ENCODE measurements at regions of chr19 and their contacts with region 1.

Region 1: DNA sequence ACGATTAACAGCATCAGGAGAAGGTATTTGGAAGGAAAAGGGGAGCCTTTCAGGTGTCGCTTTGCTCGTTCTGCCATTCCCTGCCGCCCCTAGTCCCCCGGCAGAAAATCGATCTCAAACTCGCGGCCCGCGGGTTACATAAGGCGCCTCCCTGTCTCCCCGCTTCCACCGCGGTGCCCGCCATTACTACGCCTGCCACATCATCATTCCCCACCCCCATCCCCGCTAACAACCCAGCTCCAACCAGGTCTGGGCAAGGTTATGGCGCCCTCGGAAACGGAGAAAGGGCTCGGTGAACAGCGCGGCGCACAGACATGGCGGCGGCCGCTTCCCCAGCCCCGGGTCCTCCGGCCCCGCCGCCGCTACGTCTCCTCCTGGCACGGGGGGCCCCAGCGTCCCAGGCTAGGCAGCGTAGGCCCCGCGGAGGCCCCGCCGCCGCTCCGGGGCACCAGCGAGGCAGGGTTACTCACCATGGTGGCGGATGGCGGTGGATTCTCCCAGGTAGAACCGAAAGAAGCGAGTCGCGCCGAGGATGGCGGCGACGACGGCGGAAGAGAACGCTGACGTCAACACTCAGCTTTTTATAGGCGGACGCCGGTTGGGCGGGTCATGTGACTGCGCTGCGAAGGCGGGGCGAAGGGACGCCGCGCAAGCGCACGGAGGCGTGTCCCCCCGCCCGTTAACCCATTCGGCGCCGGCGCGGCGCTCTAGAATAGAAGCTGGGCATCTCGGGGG is at the start of gene EEF2:
- DNase-seq: peak; percentile 87
- H3K4me3 Mint-ChIP-seq: peak within 1 kb of the TSS; percentile 93
- H3K27ac Mint-ChIP-seq: peak within 1 kb of the TSS; percentile 91
- H3K4me1 Mint-ChIP-seq: peaks cover 43% of the 10 kb centered on the region
- H3K27me3 Mint-ChIP-seq: peaks cover 2% of the 10 kb centered on the region
- total RNA-seq, gene EEF2: 2,359 TPM in 2 replicates

Region 2: GRCh38 chr19:3958808-3959707 is 26.0 kb before region 1 on chr19:
- intact Hi-C with region 1: no loop called
- DNase-seq: no peak
- H3K4me3 Mint-ChIP-seq: no peak overlapping the region
- H3K27ac Mint-ChIP-seq: no peak overlapping the region
- H3K4me1 Mint-ChIP-seq: no peaks in the 10 kb centered on the region
- H3K27me3 Mint-ChIP-seq: no peaks in the 10 kb centered on the region

Region 3: DNA sequence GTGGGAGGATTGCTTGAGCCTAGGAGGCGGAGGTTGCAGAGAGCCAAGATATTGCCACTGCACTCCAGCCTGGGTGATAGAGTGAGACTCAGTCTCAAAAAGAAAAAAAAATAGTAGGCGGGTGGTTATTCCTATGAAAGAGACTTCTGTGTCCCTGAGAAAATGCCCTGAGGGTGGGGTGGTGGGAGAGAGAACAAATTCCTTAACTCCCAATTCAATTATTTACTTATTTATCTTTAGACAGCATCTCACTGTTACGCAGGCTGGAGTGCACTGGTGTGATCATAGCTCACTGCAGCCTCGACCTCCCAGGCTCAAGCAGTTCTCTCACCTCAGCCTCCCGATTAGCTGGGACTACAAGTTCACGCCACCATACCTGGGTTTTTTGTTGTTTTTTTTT is 10.6 kb after region 1 on chr19:
- intact Hi-C with region 1: no loop called
- DNase-seq: no peak
- H3K4me3 Mint-ChIP-seq: no peak overlapping the region
- H3K27ac Mint-ChIP-seq: no peak overlapping the region
- H3K4me1 Mint-ChIP-seq: peaks cover 9% of the 10 kb centered on the region
- H3K27me3 Mint-ChIP-seq: no peaks in the 10 kb centered on the region

Region 4: GRCh38 chr19:4007021-4007835 is 22.2 kb after region 1 on chr19 and contains the start of gene PIAS4:
- intact Hi-C with region 1: loop called (anchors 1 kb)
- DNase-seq: peak; percentile 94
- H3K4me3 Mint-ChIP-seq: peak within 1 kb of the TSS; percentile 90
- H3K27ac Mint-ChIP-seq: peak within 1 kb of the TSS; percentile 84
- H3K4me1 Mint-ChIP-seq: peaks cover 18% of the 10 kb centered on the region
- H3K27me3 Mint-ChIP-seq: no peaks in the 10 kb centered on the region
- total RNA-seq, gene PIAS4: 37.6 and 41.0 TPM in 2 replicates

Region 5: GRCh38 chr19:4123615-4124568 is 138.8 kb after region 1 on chr19 and contains the start of gene MAP2K2:
- intact Hi-C with region 1: loop called (anchors 2 kb)
- DNase-seq: peak; percentile 94
- H3K4me3 Mint-ChIP-seq: peak within 1 kb of the TSS; percentile 100
- H3K27ac Mint-ChIP-seq: peak within 1 kb of the TSS; percentile 98
- H3K4me1 Mint-ChIP-seq: peaks cover 17% of the 10 kb centered on the region
- H3K27me3 Mint-ChIP-seq: no peaks in the 10 kb centered on the region
- total RNA-seq, gene MAP2K2: 131 and 135 TPM in 2 replicates

Region 6: DNA sequence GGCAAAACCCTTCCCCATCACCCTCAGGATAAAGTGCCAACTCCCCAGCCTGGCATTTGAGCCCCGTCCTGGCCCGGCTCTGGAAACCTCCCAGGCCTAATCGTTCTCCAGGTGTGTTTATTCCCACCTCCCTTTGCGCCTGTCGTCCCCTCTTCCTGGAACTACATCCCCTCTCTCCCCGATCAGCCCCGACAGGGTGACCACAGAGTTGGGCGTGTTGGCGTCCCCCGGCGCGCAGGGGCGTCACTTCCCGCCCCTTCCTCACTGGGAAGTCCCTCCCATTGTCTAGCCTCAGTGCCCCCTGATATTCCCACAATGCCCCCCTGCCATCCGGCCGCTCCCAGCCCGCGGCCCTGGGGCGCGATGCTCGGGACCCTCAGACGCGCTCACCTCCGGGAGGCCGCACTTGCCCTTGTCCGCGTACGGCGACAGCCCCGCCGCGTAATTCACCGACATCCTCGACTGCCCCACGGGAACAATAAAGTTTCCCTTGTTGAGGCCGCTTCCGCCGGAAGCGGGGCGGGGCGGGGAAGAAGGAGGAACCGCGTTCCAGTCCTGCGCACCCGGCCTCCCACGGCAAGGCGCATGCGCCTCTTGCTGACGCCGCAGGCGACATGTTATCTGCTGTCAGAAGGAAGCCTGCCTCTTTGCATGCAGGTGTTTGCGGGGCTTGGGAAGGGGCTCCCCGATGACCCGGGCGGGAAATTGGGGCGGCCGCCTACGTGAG is 197.2 kb after region 1 on chr19 and contains the starts of genes ANKRD24 and SIRT6:
- intact Hi-C with region 1: loop called (anchors 1 kb)
- DNase-seq: peak; percentile 96
- H3K4me3 Mint-ChIP-seq: peak within 1 kb of the TSS; percentile 98
- H3K27ac Mint-ChIP-seq: peak within 1 kb of the TSS; percentile 94
- H3K4me1 Mint-ChIP-seq: peaks cover 45% of the 10 kb centered on the region
- H3K27me3 Mint-ChIP-seq: peaks cover 8% of the 10 kb centered on the region
- total RNA-seq, gene ANKRD24: 0.49 and 0.54 TPM in 2 replicates
- total RNA-seq, gene SIRT6: 42.6 and 46.4 TPM in 2 replicates